PC-3 (cell line): ENCODE measurements at regions of chr7 and their contacts with region 1.

Region 1: GRCh38 chr7:80699045-80699638 is 60.7 kb downstream of the CD36 start:
- DNase-seq: peak; percentile 85
- ATAC-seq: peak; percentile 70
- H3K4me3 ChIP-seq: no peak overlapping the region
- H3K27ac ChIP-seq: no peak overlapping the region
- H3K4me1 ChIP-seq: peaks cover 10% of the 10 kb centered on the region; the same call in 1 of the 2 replicates
- H3K27me3 ChIP-seq: no peaks in the 10 kb centered on the region
- CTCF ChIP-seq: peak; percentile 81

Region 2: DNA sequence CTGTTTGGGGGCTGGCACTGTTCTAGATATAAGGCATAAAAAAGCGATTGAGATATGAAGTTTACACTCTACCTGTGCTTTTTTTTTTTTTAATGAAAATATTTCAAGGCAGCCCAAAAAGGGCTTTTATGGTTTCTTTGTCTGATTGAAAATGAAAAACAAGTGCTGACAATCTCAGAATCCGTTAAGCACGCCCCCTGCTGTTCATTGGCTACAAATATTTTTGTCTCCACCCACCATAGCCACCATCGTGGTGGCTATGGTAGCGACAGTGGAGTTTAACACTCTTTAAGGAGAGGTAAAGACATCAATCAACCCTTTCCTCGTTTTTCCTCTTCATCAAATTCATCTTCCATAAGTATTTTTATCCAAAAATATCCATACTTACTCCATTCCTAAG is 33.5 kb after region 1 on chr7:
- CTCF ChIA-PET with region 1: no interaction called
- POLR2A ChIA-PET with region 1: interaction called, 23 read pairs
- intact Hi-C with region 1: loop called (anchors 5 kb)
- DNase-seq: peak; percentile 42
- ATAC-seq: no peak
- H3K4me3 ChIP-seq: no peak overlapping the region
- H3K27ac ChIP-seq: no peak overlapping the region
- H3K4me1 ChIP-seq: 0 out of 2 replicates have a peak, but pooled peaks cover 6% of the 10 kb centered on the region
- H3K27me3 ChIP-seq: no peaks in the 10 kb centered on the region
- CTCF ChIP-seq: peak; percentile 59

Region 3: GRCh38 chr7:80781561-80781979 is 82.4 kb after region 1 on chr7:
- CTCF ChIA-PET with region 1: no interaction called
- POLR2A ChIA-PET with region 1: interaction called, 8 read pairs
- intact Hi-C with region 1: loop called (anchors 5 kb)
- DNase-seq: peak; percentile 93
- ATAC-seq: peak; percentile 55
- H3K4me3 ChIP-seq: no peak overlapping the region
- H3K27ac ChIP-seq: peak overlapping the region; percentile 18
- H3K4me1 ChIP-seq: peaks cover 56% of the 10 kb centered on the region
- H3K27me3 ChIP-seq: no peaks in the 10 kb centered on the region
- CTCF ChIP-seq: no peak

Region 4: GRCh38 chr7:81457852-81458522 is 758.8 kb after region 1 on chr7:
- CTCF ChIA-PET with region 1: no interaction called
- POLR2A ChIA-PET with region 1: no interaction called
- intact Hi-C with region 1: loop called (anchors 1 kb)
- DNase-seq: peak; percentile 72
- ATAC-seq: no peak; the same call in 1 of the 2 replicates
- H3K4me3 ChIP-seq: no peak overlapping the region
- H3K27ac ChIP-seq: no peak overlapping the region
- H3K4me1 ChIP-seq: peaks cover 35% of the 10 kb centered on the region
- H3K27me3 ChIP-seq: no peaks in the 10 kb centered on the region
- CTCF ChIP-seq: peak; percentile 48

Region 5: GRCh38 chr7:81469869-81470723 is 771.0 kb after region 1 on chr7:
- CTCF ChIA-PET with region 1: interaction called, 3 read pairs
- POLR2A ChIA-PET with region 1: no interaction called
- intact Hi-C with region 1: loop called (anchors 1 kb)
- DNase-seq: peak; percentile 70
- ATAC-seq: peak; percentile 98
- H3K4me3 ChIP-seq: no peak overlapping the region
- H3K27ac ChIP-seq: no peak overlapping the region
- H3K4me1 ChIP-seq: no peaks in the 10 kb centered on the region
- H3K27me3 ChIP-seq: no peaks in the 10 kb centered on the region
- CTCF ChIP-seq: peak; percentile 80